Activated T-helper 1 cell treated with anti-CD3 and anti-CD28 coated beads, Interleukin-12 subunit alpha, Interleukin-12 subunit beta, Interleukin-2, Interleukin-4 antibody, amounts not matched to agents 30 ng/mL and 10 ng/mL and 1 ng/mL, durations not matched to agents 14 hours and 24 hours and 36 hours (primary cell): ENCODE measurements at regions of chr1 and their contacts with region 1.

Region 1: DNA sequence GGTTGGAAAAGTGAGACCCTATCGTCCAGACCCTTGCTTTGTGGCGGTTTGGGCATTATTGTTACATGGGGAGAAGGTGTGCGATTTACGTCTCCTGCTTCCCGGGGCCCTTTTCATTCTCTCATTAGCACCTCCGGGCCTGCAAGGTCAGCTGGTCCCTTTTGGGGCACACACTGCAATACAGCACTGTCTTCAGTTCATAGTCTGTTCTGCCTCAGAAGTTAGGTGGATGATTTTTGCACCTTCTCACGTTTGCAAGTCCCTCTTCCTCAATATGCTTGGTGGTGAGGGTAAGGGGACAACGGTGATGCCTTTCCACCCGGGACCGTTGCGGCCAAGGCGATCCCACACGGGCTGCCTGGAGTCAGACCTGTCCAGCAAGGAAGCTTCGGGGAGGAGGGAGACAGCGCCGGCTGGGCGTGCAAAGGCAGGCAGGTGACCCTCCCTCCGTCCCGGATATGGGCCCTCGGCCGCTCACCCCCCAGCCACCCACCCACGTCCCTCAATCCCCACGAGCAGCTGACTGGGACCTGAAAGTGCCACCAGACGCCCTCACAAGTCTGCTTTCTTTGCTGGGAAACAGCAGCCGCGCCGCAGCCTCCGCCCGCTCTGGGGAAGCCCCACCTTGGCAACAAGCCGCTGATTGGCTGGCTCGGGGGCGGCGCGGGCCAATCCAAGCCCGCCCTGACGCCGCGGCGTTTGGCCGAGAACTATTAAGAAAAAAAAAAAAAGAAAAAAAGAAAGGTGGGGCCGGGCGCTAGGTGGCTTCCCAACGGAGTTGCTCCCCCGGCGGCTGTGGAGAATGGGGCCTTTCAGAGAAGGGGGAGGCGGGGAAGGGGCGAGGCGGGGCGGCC is 21.7 kb downstream of the BTG2 start:
- DNase-seq: peak; percentile 94
- H3K4me3 Mint-ChIP-seq: peak overlapping the region; percentile 79
- H3K27ac Mint-ChIP-seq: peak overlapping the region; percentile 97
- H3K4me1 Mint-ChIP-seq: peaks cover 65% of the 10 kb centered on the region
- H3K27me3 Mint-ChIP-seq: peaks cover 2% of the 10 kb centered on the region

Region 2: GRCh38 chr1:202688375-202688774 is 638.7 kb before region 1 on chr1:
- intact Hi-C with region 1: no loop called
- DNase-seq: no peak
- H3K4me3 Mint-ChIP-seq: no peak overlapping the region
- H3K27ac Mint-ChIP-seq: no peak overlapping the region
- H3K4me1 Mint-ChIP-seq: no peaks in the 10 kb centered on the region
- H3K27me3 Mint-ChIP-seq: peaks cover 13% of the 10 kb centered on the region

Region 3: DNA sequence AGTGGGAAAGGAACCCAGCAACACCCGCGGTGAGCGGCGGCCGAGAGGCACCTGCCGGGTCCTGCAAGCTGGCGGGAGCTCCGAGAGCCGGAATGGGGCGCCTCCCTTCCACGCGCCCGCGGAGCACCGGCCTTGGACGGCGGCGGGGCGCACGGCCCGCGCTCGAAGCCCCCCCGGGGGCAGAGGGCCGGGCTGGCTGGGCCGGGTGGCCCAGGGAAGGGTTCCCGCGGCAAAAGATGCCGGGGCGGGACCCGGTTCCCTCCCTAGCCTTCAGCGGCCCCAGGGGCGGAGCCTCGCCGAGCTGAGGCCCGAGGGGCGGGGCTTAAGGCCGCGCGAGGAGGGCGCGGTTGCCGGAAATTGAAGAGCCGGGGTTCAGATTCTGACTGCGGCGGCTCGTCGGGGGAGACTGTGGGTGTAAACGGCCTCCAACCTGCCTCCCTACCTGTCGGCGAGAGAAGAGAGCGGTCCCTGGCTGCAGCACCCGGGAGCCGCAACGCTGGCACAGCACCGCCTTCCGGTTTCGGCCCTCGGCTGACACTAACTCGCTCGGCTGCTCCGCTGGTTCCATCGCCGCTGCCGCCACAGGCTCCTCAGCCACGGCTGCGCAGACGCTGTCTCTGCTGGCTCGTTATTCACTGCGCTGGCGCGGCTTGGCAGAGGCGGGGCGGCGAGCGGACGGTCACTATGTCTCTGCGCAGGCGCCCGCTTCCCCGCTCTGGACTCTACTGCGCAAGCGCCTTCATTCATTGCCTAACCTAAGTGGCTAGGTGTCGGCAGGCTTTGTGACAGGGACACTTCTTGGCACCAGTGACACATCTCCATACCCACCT is 438.3 kb before region 1 on chr1 and contains the start of gene RABIF:
- intact Hi-C with region 1: loop called (anchors 5 kb)
- DNase-seq: peak; percentile 95
- H3K4me3 Mint-ChIP-seq: peak within 1 kb of the TSS; percentile 96
- H3K27ac Mint-ChIP-seq: peak within 1 kb of the TSS; percentile 98
- H3K4me1 Mint-ChIP-seq: peaks cover 25% of the 10 kb centered on the region
- H3K27me3 Mint-ChIP-seq: no peaks in the 10 kb centered on the region
- total RNA-seq, gene RABIF: 11.8 and 13.4 TPM in 2 replicates

Region 4: GRCh38 chr1:203267347-203267846 is 59.7 kb before region 1 on chr1:
- intact Hi-C with region 1: loop called (anchors 1 kb)
- DNase-seq: peak; percentile 78
- H3K4me3 Mint-ChIP-seq: peak overlapping the region; percentile 79
- H3K27ac Mint-ChIP-seq: peak overlapping the region; percentile 19
- H3K4me1 Mint-ChIP-seq: peaks cover 15% of the 10 kb centered on the region
- H3K27me3 Mint-ChIP-seq: peaks cover 6% of the 10 kb centered on the region

Region 5: GRCh38 chr1:203304919-203305808 is 21.9 kb before region 1 on chr1 and contains the start of gene BTG2:
- intact Hi-C with region 1: loop called (anchors 1 kb)
- DNase-seq: peak; percentile 89
- H3K4me3 Mint-ChIP-seq: peak within 1 kb of the TSS; percentile 92
- H3K27ac Mint-ChIP-seq: peak within 1 kb of the TSS; percentile 93
- H3K4me1 Mint-ChIP-seq: peaks cover 61% of the 10 kb centered on the region
- H3K27me3 Mint-ChIP-seq: no peaks in the 10 kb centered on the region
- total RNA-seq, gene BTG2: 137 and 139 TPM in 2 replicates

Region 6: DNA sequence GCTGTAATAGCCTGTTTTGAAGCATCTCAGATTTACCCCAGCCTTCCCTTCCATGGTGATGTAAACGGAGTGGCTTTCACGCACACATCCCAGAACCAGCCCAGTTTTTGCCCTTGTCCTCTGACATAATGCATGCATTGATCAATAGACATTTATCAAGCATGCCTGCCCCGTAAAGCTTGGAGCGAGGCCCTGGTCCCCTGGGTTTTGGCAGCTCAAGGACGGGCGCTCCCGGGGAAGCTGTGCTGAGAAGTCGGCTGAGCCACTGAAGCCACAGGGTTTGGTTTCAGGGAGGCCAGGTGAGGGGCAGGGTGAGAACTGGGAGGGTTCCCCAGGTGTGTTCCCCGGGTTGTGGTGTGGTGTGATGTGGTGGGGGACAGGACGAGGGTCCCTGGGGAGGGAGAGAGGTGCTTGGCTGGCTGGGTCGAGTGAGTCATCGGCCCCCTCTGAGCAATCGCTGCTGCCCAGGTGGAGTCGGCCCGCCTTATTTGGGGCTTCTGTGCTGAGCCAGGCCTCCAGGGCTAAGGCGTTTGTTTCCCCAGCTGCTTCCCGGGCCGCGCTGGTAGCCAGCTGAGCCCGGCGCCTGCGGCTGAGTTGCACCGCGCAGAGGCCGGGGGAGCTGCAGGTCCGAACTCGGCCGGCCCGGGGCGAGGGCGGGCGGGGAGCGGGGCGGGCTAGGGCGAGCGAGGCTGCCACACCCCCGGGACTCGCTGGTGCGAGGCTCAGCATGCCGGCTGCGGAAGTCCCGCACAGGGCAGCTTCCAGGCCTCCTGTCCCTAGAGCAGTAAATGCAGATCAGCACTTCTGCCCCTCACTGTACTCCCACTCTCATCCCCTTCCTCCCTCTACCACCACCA is 323.2 kb after region 1 on chr1:
- intact Hi-C with region 1: loop called (anchors 2 kb)
- DNase-seq: peak; percentile 56
- H3K4me3 Mint-ChIP-seq: peak overlapping the region; percentile 77
- H3K27ac Mint-ChIP-seq: peak overlapping the region; percentile 98
- H3K4me1 Mint-ChIP-seq: peaks cover 78% of the 10 kb centered on the region
- H3K27me3 Mint-ChIP-seq: no peaks in the 10 kb centered on the region

Region 7: GRCh38 chr1:203807196-203807595 is 480.1 kb after region 1 on chr1:
- intact Hi-C with region 1: no loop called
- DNase-seq: no peak
- H3K4me3 Mint-ChIP-seq: no peak overlapping the region
- H3K27ac Mint-ChIP-seq: peak overlapping the region; percentile 26
- H3K4me1 Mint-ChIP-seq: peaks cover 6% of the 10 kb centered on the region
- H3K27me3 Mint-ChIP-seq: no peaks in the 10 kb centered on the region

Region 8: GRCh38 chr1:203861379-203862184 is 534.5 kb after region 1 on chr1 and contains the start of gene SNRPE:
- intact Hi-C with region 1: loop called (anchors 5 kb)
- DNase-seq: peak; percentile 96
- H3K4me3 Mint-ChIP-seq: peak within 1 kb of the TSS; percentile 100
- H3K27ac Mint-ChIP-seq: peak within 1 kb of the TSS; percentile 98
- H3K4me1 Mint-ChIP-seq: peaks cover 25% of the 10 kb centered on the region
- H3K27me3 Mint-ChIP-seq: no peaks in the 10 kb centered on the region
- total RNA-seq, gene SNRPE: 250 and 270 TPM in 2 replicates